H1 (cell line): ENCODE measurements at regions of chr12 and their contacts with region 1.

Region 1: DNA sequence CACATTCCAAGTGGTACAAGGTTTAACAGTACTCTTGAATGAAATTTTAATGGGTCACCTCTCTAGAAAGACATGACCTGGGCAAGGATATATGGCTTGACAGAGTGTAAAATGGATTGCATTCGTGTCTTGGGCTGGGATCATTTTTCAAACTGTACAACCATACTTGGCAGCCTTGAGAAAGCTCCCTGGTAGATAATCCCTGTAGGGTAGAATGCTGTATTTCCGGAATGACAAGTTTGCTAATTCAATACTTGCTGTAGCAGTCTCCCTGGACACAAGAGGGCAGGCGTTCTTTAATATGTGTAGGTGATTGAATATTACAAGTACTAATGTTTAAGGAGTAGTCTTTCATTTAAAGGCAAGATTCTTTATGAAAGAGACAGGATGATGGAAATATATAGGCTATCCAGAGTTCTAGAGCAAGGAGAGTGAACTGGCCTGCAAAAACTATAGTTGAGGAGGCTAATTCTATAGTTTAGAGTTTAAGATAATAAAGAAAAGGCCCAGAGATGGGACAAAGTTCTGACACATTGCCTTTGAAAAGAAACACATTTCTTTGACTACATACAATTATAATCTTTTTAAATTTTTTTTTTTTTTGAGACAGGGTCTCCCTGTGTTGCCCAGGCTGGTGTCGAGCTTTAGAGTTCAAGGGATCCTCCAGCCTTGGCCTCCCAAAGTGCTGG is 53.4 kb downstream of the PLBD1 start:
- DNase-seq: peak in 1 of 2 experiments; percentile 5
- H3K4me3 ChIP-seq: no peak overlapping the region
- H3K27ac ChIP-seq: 0 out of 2 replicates have a peak overlapping the region, but pooled peaks have one; percentile 14
- H3K4me1 ChIP-seq: peaks cover 0 to 2% (median 1%) of the 10 kb centered on the region in 4 experiments; a peak in 2 of 7 replicates
- H3K27me3 ChIP-seq: no peaks in the 10 kb centered on the region
- CTCF ChIP-seq: peak in 2 of 3 experiments; percentile 50 to 61; a peak in 3 of 4 replicates
- EP300 ChIP-seq: no peak
- POLR2A ChIP-seq: no peak
- RAD21 ChIP-seq: peak; percentile 56 to 69

Region 2: GRCh38 chr12:14495326-14495725 is 19.0 kb before region 1 on chr12:
- CTCF ChIA-PET with region 1: no interaction called
- POLR2A ChIA-PET with region 1: no interaction called
- DNase-seq: no peak
- H3K4me3 ChIP-seq: no peak overlapping the region
- H3K27ac ChIP-seq: no peak overlapping the region
- H3K4me1 ChIP-seq: no peaks in the 10 kb centered on the region
- H3K27me3 ChIP-seq: no peaks in the 10 kb centered on the region
- CTCF ChIP-seq: no peak
- EP300 ChIP-seq: no peak
- POLR2A ChIP-seq: no peak
- RAD21 ChIP-seq: no peak

Region 3: GRCh38 chr12:14618983-14619382 is 104.7 kb after region 1 on chr12:
- CTCF ChIA-PET with region 1: interaction called, 32 read pairs
- POLR2A ChIA-PET with region 1: no interaction called
- DNase-seq: no peak
- H3K4me3 ChIP-seq: no peak overlapping the region
- H3K27ac ChIP-seq: no peak overlapping the region
- H3K4me1 ChIP-seq: no peaks in the 10 kb centered on the region
- H3K27me3 ChIP-seq: peaks cover 0 to 2% (median 0%) of the 10 kb centered on the region in 4 experiments; a peak in 1 of 7 replicates
- CTCF ChIP-seq: peak in 2 of 3 experiments; percentile 34 to 57; a peak in 2 of 4 replicates
- EP300 ChIP-seq: no peak
- POLR2A ChIP-seq: no peak
- RAD21 ChIP-seq: peak; percentile 57 to 62